ENCODE measurements at regions of chr4 and their contacts with region 1.

Region 1: GRCh38 chr4:145216535-145216934 is 36.1 kb upstream of the OTUD4 start:
- DNase-seq: no peak
- ATAC-seq: no peak

Region 2: GRCh38 chr4:145609481-145610427 is 393.2 kb after region 1 on chr4:
- intact Hi-C with region 1: loop called in 1 of 2 experiments (anchors 5 kb)
- DNase-seq: peak; percentile 30
- ATAC-seq: peak in 1 of 2 donors; percentile 43

Measured in left cardiac atrium (tissue), 4 donors.